CD4-positive, alpha-beta memory T cell (primary cell): ENCODE measurements at regions of chr11 and their contacts with region 1.

Region 1: DNA sequence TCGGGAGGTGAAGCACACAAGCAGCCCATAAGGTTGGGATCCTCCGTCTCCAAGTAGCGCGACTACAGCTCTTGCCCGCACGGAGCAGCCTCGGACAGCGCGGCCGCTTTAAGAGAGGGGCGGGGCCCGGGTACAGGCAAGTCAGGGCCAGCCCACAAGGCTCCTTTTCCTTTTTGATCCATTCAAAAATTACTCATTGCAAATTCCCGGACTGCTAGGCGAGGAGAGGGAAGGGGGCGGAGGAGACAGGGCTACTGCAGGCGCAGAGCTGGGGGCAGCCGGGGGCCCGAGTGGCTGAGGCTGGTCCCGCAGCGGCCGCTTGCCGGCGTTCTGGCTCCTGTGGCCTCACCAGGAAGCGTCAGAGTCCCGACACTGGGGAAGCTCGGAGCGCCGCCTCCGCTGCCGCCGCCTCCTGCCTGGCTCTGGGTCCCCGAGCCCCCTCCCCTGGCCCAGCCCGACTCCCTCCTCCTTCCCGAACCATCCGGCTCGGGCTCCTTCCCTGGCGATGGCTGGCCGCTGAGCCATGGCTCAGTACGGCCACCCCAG is at the start of gene UBASH3B:
- DNase-seq: peak; percentile 63 to 68 (median 66)
- H3K4me3 ChIP-seq: peak within 1 kb of the TSS; percentile 55 to 86
- H3K4me3 Mint-ChIP-seq: peak within 1 kb of the TSS; percentile 97 to 98 (median 98)
- H3K27ac ChIP-seq: peak within 1 kb of the TSS; percentile 66
- H3K27ac Mint-ChIP-seq: peak within 1 kb of the TSS; percentile 88 to 98 (median 95)
- H3K4me1 ChIP-seq: peaks cover 44% of the 10 kb centered on the region
- H3K4me1 Mint-ChIP-seq: peaks cover 20 to 53% (median 40%) of the 10 kb centered on the region in 4 donors
- H3K27me3 ChIP-seq: no peaks in the 10 kb centered on the region
- H3K27me3 Mint-ChIP-seq: no peaks in the 10 kb centered on the region
- total RNA-seq, gene UBASH3B: 26.6 to 30.9 TPM

Region 2: GRCh38 chr11:122601141-122602125 is 54.2 kb before region 1 on chr11:
- CTCF ChIA-PET with region 1: no interaction called
- POLR2A ChIA-PET with region 1: no interaction called
- intact Hi-C with region 1: no loop called
- DNase-seq: no peak
- H3K4me3 ChIP-seq: no peak overlapping the region
- H3K4me3 Mint-ChIP-seq: no peak overlapping the region
- H3K27ac ChIP-seq: no peak overlapping the region
- H3K27ac Mint-ChIP-seq: no peak overlapping the region
- H3K4me1 ChIP-seq: no peaks in the 10 kb centered on the region
- H3K4me1 Mint-ChIP-seq: no peaks in the 10 kb centered on the region
- H3K27me3 ChIP-seq: no peaks in the 10 kb centered on the region
- H3K27me3 Mint-ChIP-seq: peaks cover 5 to 14% of the 10 kb centered on the region in 2 donors

Region 3: GRCh38 chr11:122668562-122669090 is 13.0 kb after region 1 on chr11:
- CTCF ChIA-PET with region 1: interaction called, 65 read pairs
- POLR2A ChIA-PET with region 1: interaction called, 73 read pairs
- intact Hi-C with region 1: loop called (anchors 1 kb)
- DNase-seq: peak in 4 of 5 donors; percentile 51 to 62 (median 54)
- H3K4me3 ChIP-seq: peak overlapping the region in 1 of 2 donors; percentile 24
- H3K4me3 Mint-ChIP-seq: peak overlapping the region; percentile 22 to 88 (median 68)
- H3K27ac ChIP-seq: peak overlapping the region; percentile 15
- H3K27ac Mint-ChIP-seq: peak overlapping the region; percentile 73 to 93 (median 88)
- H3K4me1 ChIP-seq: peaks cover 80% of the 10 kb centered on the region
- H3K4me1 Mint-ChIP-seq: peaks cover 49 to 84% (median 69%) of the 10 kb centered on the region in 4 donors
- H3K27me3 ChIP-seq: no peaks in the 10 kb centered on the region
- H3K27me3 Mint-ChIP-seq: no peaks in the 10 kb centered on the region

Region 4: DNA sequence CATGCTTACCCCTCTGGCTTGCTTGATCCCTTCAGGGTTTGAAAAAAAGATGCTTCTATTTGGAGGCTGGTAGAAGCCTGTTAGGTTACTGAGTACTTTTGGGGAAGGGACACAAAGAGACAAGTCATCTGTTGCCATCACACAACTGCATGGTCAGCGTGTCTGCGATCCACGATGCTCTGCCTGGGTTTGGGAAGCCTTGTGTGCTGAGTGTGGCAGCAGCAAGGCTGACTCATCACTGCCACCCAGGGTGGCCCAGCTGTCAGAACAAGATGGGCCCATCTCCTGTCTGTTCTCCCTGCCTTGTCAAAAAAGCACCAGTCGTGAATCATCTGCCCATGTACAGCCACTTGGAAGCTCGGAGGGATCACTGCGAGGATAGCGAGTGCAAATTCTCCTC is 26.1 kb after region 1 on chr11:
- CTCF ChIA-PET with region 1: interaction called, 36 read pairs
- POLR2A ChIA-PET with region 1: interaction called, 14 read pairs
- intact Hi-C with region 1: no loop called
- DNase-seq: no peak
- H3K4me3 ChIP-seq: no peak overlapping the region
- H3K4me3 Mint-ChIP-seq: no peak overlapping the region
- H3K27ac ChIP-seq: no peak overlapping the region
- H3K27ac Mint-ChIP-seq: peak overlapping the region in 2 of 7 donors; percentile 4 to 27
- H3K4me1 ChIP-seq: peaks cover 25% of the 10 kb centered on the region
- H3K4me1 Mint-ChIP-seq: peaks cover 29 to 75% (median 45%) of the 10 kb centered on the region in 4 donors
- H3K27me3 ChIP-seq: no peaks in the 10 kb centered on the region
- H3K27me3 Mint-ChIP-seq: no peaks in the 10 kb centered on the region

Region 5: DNA sequence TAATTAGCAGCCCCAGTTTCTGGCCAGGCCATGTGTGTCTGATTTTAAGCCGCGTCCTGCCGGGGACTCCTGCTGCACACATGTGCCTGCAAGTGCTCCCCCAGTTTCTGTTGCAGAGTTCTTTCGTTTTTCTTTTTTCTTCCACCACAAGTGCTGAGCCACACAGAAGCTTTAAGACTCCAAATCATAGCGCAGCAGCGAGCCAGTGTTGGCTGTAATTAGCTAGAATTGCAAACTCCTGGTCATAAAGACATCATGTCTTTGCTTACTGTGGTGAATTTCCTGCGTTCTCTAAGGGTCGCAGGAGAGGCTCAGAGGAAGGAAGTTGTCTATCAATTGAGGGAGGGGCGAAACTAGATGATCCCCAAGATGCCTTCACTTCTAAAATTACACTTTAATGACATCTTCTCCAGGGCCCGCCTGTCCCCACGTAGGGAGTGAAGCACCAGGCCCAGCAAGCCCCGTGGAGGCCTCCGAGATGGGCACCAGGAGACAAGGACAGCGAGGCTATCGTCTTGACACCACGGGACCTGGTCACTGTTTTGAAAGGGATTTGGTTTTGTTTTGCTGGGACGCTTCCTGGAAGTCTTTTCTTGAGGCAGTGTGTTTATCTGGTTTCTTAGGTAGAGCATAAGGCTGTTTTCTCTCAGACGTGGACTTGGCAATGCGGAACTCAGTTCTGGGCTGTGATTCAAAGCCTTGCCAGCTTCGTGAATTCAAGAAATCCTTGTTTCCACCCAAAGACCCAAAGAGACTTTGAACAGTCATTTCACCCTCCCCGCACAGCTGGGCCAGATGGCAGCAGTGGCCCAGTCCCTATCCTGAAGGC is 71.7 kb after region 1 on chr11:
- CTCF ChIA-PET with region 1: interaction called, 16 read pairs
- POLR2A ChIA-PET with region 1: interaction called, 23 read pairs
- intact Hi-C with region 1: loop called (anchors 2 kb)
- DNase-seq: peak in 4 of 5 donors; percentile 38 to 50 (median 47)
- H3K4me3 ChIP-seq: peak overlapping the region; percentile 9 to 38
- H3K4me3 Mint-ChIP-seq: peak overlapping the region; percentile 79 to 93 (median 88)
- H3K27ac ChIP-seq: peak overlapping the region; percentile 59
- H3K27ac Mint-ChIP-seq: peak overlapping the region; percentile 92 to 99 (median 95)
- H3K4me1 ChIP-seq: peaks cover 67% of the 10 kb centered on the region
- H3K4me1 Mint-ChIP-seq: peaks cover 51 to 66% (median 59%) of the 10 kb centered on the region in 4 donors
- H3K27me3 ChIP-seq: no peaks in the 10 kb centered on the region
- H3K27me3 Mint-ChIP-seq: no peaks in the 10 kb centered on the region

Region 6: GRCh38 chr11:122749005-122749687 is 93.5 kb after region 1 on chr11:
- CTCF ChIA-PET with region 1: interaction called, 440 read pairs
- POLR2A ChIA-PET with region 1: interaction called, 121 read pairs
- intact Hi-C with region 1: loop called (anchors 1 kb)
- DNase-seq: peak; percentile 31 to 70 (median 49)
- H3K4me3 ChIP-seq: no peak overlapping the region
- H3K4me3 Mint-ChIP-seq: peak overlapping the region in 5 of 8 donors; percentile 19 to 56 (median 47)
- H3K27ac ChIP-seq: no peak overlapping the region
- H3K27ac Mint-ChIP-seq: peak overlapping the region in 5 of 7 donors; percentile 31 to 78 (median 65)
- H3K4me1 ChIP-seq: peaks cover 56% of the 10 kb centered on the region
- H3K4me1 Mint-ChIP-seq: peaks cover 20 to 60% (median 40%) of the 10 kb centered on the region in 4 donors
- H3K27me3 ChIP-seq: no peaks in the 10 kb centered on the region
- H3K27me3 Mint-ChIP-seq: no peaks in the 10 kb centered on the region